Caco-2 (cell line): ENCODE measurements at regions of chr15 and their contacts with region 1.

Region 1: DNA sequence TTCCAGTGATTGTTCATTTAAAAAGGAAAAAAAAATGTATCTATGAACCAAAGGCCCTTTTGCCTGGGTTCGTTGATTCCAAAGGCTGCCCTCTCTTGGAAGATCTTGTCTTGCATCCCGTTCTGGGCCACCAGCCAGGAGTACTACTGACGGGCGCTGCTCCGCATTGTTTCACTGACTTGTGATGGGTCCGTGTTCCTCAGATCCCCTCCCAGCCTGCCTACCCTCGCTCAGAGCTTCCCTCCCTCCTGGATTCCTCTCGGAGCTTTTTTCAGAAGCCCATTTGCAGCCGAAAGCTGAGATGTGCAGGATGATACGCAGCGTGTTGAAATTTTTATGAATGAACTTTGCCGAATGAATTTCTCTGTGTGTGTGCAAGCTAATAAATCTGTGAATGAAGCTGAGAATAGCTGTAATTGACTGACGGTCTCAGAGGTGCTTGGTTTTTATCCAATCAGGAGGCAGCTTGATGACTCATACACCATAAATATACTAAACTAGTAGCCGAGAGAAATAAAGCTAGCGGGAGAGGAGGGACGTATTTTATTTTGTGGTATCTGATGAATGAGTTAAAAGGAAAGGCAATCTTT is at the start of gene SHC4:
- DNase-seq: peak in 1 of 2 experiments; percentile 35
- H3K4me3 ChIP-seq: peak within 1 kb of the TSS; percentile 32
- H3K4me3 Mint-ChIP-seq: peak within 1 kb of the TSS; percentile 70
- H3K27ac Mint-ChIP-seq: no peak within 1 kb of the TSS
- H3K4me1 ChIP-seq: no peaks in the 10 kb centered on the region
- H3K4me1 Mint-ChIP-seq: peaks cover 11% of the 10 kb centered on the region
- H3K27me3 ChIP-seq: no peaks in the 10 kb centered on the region; the same call in none of the 2 replicates
- H3K27me3 Mint-ChIP-seq: peaks cover 19% of the 10 kb centered on the region
- CTCF ChIP-seq: peak in 1 of 2 experiments; percentile 12
- total RNA-seq, gene SHC4: not detected in 2 replicates

Region 2: GRCh38 chr15:48481802-48482201 is 481.8 kb before region 1 on chr15:
- CTCF ChIA-PET with region 1: no interaction called
- POLR2A ChIA-PET with region 1: no interaction called
- intact Hi-C with region 1: no loop called
- DNase-seq: no peak
- H3K4me3 ChIP-seq: no peak overlapping the region
- H3K4me3 Mint-ChIP-seq: no peak overlapping the region
- H3K27ac Mint-ChIP-seq: no peak overlapping the region
- H3K4me1 ChIP-seq: no peaks in the 10 kb centered on the region
- H3K4me1 Mint-ChIP-seq: no peaks in the 10 kb centered on the region
- H3K27me3 ChIP-seq: no peaks in the 10 kb centered on the region
- H3K27me3 Mint-ChIP-seq: peaks cover 3% of the 10 kb centered on the region
- CTCF ChIP-seq: no peak

Region 3: GRCh38 chr15:48940448-48940893 is 23.1 kb before region 1 on chr15:
- CTCF ChIA-PET with region 1: no interaction called
- POLR2A ChIA-PET with region 1: no interaction called
- intact Hi-C with region 1: no loop called
- DNase-seq: no peak
- H3K4me3 ChIP-seq: no peak overlapping the region
- H3K4me3 Mint-ChIP-seq: no peak overlapping the region
- H3K27ac Mint-ChIP-seq: no peak overlapping the region
- H3K4me1 ChIP-seq: peaks cover 1% of the 10 kb centered on the region; the same call in 1 of the 2 replicates
- H3K4me1 Mint-ChIP-seq: peaks cover 3% of the 10 kb centered on the region
- H3K27me3 ChIP-seq: no peaks in the 10 kb centered on the region
- H3K27me3 Mint-ChIP-seq: no peaks in the 10 kb centered on the region
- CTCF ChIP-seq: no peak

Region 4: DNA sequence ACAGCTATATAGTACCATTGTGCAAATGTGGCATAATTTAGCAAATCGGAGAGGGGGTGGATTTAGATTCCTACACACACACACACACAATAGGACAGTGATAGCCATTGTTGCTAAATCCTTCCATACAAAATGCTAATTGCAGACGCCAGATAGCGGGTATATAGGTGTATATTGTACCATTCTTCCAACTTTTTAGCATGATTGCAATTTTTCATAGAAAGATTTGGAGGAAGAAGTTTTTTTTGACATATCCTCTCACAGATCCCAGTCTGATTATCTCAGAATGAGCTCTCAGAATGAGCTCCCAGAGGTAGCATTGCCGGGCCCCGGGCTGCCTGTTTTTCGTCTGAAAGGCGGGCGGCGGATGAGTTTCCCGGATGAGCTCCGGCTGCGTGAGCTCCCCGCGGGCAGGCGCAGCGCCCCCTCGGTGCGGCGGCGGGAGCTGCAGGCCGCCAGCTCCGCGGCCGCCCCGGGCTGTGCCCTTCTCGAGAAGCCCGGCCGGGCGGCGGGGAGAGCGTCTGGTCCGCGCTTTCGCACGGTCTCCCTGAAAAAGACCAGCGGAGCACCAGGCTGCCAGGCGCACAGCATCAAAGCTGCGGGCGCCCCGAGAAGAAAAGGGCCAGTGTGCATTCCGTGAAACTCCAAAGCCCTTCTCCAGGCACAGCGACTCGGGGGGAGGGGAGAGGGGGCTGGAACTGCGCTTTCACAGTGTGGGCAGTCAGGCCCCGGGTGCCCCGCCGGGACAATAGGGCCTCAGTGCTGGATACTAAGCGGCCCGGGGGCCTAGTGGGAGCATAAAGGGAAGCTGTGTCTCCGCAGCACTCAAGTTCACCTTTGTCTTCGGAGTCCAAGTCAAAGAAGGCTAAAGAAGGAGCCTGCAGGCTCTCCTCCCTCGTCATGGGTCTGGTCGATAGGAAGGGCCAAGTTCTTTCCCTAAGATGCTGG is 12.1 kb after region 1 on chr15:
- CTCF ChIA-PET with region 1: interaction called, 41 read pairs
- POLR2A ChIA-PET with region 1: no interaction called
- intact Hi-C with region 1: loop called (anchors 1 kb)
- DNase-seq: peak; percentile 74 to 87
- H3K4me3 ChIP-seq: peak overlapping the region; percentile 50
- H3K4me3 Mint-ChIP-seq: peak overlapping the region; percentile 60
- H3K27ac Mint-ChIP-seq: no peak overlapping the region
- H3K4me1 ChIP-seq: peaks cover 11% of the 10 kb centered on the region
- H3K4me1 Mint-ChIP-seq: peaks cover 10% of the 10 kb centered on the region
- H3K27me3 ChIP-seq: no peaks in the 10 kb centered on the region
- H3K27me3 Mint-ChIP-seq: peaks cover 4% of the 10 kb centered on the region
- CTCF ChIP-seq: peak; percentile 59 to 89

Region 5: GRCh38 chr15:49060710-49061505 is 97.3 kb after region 1 on chr15:
- CTCF ChIA-PET with region 1: no interaction called
- POLR2A ChIA-PET with region 1: no interaction called
- intact Hi-C with region 1: no loop called
- DNase-seq: no peak
- H3K4me3 ChIP-seq: no peak overlapping the region
- H3K4me3 Mint-ChIP-seq: no peak overlapping the region
- H3K27ac Mint-ChIP-seq: no peak overlapping the region
- H3K4me1 ChIP-seq: peaks cover 13% of the 10 kb centered on the region; the same call in 1 of the 2 replicates
- H3K4me1 Mint-ChIP-seq: peaks cover 6% of the 10 kb centered on the region
- H3K27me3 ChIP-seq: no peaks in the 10 kb centered on the region
- H3K27me3 Mint-ChIP-seq: no peaks in the 10 kb centered on the region
- CTCF ChIP-seq: no peak

Region 6: DNA sequence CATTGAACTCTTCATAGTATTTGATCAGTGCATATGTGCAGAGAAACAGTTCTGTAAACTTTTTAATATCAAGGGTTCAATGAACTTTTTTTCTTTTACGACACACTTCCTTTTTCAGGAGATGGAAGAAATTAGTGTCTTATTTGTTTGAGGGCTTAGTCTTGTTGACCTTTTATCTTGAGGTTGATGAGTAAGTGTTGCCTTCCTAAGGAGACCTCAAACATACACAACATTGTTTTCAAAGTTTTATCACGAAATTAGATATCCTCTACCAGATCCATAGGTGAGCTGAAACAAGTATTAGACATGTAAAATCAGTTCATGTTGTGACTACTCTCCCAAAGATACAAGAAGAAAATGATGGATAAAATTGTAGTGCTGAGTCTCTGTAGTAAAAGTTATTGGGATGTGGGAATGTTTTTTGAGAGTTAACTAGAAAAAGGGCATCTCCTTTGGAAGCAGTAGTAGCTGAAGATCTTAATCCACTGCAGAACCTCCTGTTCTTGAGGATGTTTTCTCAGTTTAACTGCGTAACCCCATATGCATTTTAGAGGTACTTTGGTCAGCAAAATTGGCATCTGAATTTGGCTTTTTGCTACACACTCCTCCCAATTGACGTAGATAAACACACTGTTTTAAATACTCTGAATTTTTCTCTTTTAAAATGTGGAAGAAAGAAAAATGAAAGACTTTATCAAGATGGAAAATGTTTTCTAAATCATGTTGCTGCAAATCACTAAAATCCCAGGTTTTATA is 323.2 kb after region 1 on chr15:
- CTCF ChIA-PET with region 1: no interaction called
- POLR2A ChIA-PET with region 1: no interaction called
- intact Hi-C with region 1: no loop called
- DNase-seq: no peak
- H3K4me3 ChIP-seq: no peak overlapping the region
- H3K4me3 Mint-ChIP-seq: no peak overlapping the region
- H3K27ac Mint-ChIP-seq: no peak overlapping the region
- H3K4me1 ChIP-seq: no peaks in the 10 kb centered on the region
- H3K4me1 Mint-ChIP-seq: no peaks in the 10 kb centered on the region
- H3K27me3 ChIP-seq: no peaks in the 10 kb centered on the region
- H3K27me3 Mint-ChIP-seq: no peaks in the 10 kb centered on the region
- CTCF ChIP-seq: no peak